Activated CD8-positive, alpha-beta T cell treated with anti-CD3 and anti-CD28 coated beads, Interleukin-2, amount 10 ng/mL, durations not matched to agents 7 days and 5 days (primary cell): ENCODE measurements at regions of chr22 and their contacts with region 1.

Region 1: GRCh38 chr22:40950962-40951794 is at the start of gene RBX1:
- DNase-seq: peak; percentile 99
- ATAC-seq: peak; percentile 84
- H3K4me3 Mint-ChIP-seq: peak within 1 kb of the TSS; percentile 100
- H3K27ac Mint-ChIP-seq: peak within 1 kb of the TSS; percentile 100
- H3K4me1 Mint-ChIP-seq: peaks cover 34% of the 10 kb centered on the region
- H3K27me3 Mint-ChIP-seq: no peaks in the 10 kb centered on the region
- total RNA-seq, gene RBX1: 84.0 to 87.9 TPM

Region 2: GRCh38 chr22:40965936-40966725 is 15.0 kb after region 1 on chr22:
- CTCF ChIA-PET with region 1: interaction called, 6 read pairs
- POLR2A ChIA-PET with region 1: interaction called, 17 read pairs
- DNase-seq: no peak
- ATAC-seq: no peak
- H3K4me3 Mint-ChIP-seq: no peak overlapping the region
- H3K27ac Mint-ChIP-seq: no peak overlapping the region
- H3K4me1 Mint-ChIP-seq: peaks cover 17% of the 10 kb centered on the region
- H3K27me3 Mint-ChIP-seq: no peaks in the 10 kb centered on the region

Region 3: DNA sequence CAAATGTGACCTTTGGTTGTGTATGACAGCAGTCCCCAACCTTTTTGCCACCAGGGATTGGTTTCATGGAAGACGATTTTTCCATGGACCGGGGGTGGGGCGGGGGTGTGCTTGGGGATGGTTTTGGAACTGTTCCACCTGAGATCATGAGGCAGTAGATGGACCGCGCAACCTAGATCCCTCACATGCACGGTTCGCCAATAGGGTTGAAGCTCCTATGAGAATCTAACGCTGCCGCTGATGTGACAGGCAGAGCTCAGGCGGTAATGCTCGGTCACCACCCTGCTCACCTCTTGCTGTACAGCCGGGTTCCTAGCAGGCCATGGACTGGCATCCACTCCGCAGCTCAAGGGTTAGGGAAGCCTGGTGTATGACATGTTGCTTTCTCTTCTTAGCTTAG is 21.9 kb after region 1 on chr22:
- CTCF ChIA-PET with region 1: no interaction called
- POLR2A ChIA-PET with region 1: interaction called, 17 read pairs
- DNase-seq: no peak
- ATAC-seq: no peak
- H3K4me3 Mint-ChIP-seq: no peak overlapping the region
- H3K27ac Mint-ChIP-seq: no peak overlapping the region
- H3K4me1 Mint-ChIP-seq: peaks cover 3% of the 10 kb centered on the region
- H3K27me3 Mint-ChIP-seq: no peaks in the 10 kb centered on the region

Region 4: GRCh38 chr22:41022470-41023298 is 71.5 kb after region 1 on chr22:
- CTCF ChIA-PET with region 1: interaction called, 5 read pairs
- POLR2A ChIA-PET with region 1: interaction called, 42 read pairs
- DNase-seq: peak; percentile 83
- ATAC-seq: peak; percentile 75
- H3K4me3 Mint-ChIP-seq: peak overlapping the region; percentile 71
- H3K27ac Mint-ChIP-seq: peak overlapping the region; percentile 86
- H3K4me1 Mint-ChIP-seq: peaks cover 19% of the 10 kb centered on the region
- H3K27me3 Mint-ChIP-seq: peaks cover 16% of the 10 kb centered on the region

Region 5: GRCh38 chr22:41091132-41092022 is 140.2 kb after region 1 on chr22:
- CTCF ChIA-PET with region 1: interaction called, 4 read pairs
- POLR2A ChIA-PET with region 1: interaction called, 107 read pairs
- DNase-seq: peak; percentile 99
- ATAC-seq: peak; percentile 87
- H3K4me3 Mint-ChIP-seq: peak overlapping the region; percentile 97
- H3K27ac Mint-ChIP-seq: peak overlapping the region; percentile 100
- H3K4me1 Mint-ChIP-seq: peaks cover 23% of the 10 kb centered on the region
- H3K27me3 Mint-ChIP-seq: no peaks in the 10 kb centered on the region

Region 6: DNA sequence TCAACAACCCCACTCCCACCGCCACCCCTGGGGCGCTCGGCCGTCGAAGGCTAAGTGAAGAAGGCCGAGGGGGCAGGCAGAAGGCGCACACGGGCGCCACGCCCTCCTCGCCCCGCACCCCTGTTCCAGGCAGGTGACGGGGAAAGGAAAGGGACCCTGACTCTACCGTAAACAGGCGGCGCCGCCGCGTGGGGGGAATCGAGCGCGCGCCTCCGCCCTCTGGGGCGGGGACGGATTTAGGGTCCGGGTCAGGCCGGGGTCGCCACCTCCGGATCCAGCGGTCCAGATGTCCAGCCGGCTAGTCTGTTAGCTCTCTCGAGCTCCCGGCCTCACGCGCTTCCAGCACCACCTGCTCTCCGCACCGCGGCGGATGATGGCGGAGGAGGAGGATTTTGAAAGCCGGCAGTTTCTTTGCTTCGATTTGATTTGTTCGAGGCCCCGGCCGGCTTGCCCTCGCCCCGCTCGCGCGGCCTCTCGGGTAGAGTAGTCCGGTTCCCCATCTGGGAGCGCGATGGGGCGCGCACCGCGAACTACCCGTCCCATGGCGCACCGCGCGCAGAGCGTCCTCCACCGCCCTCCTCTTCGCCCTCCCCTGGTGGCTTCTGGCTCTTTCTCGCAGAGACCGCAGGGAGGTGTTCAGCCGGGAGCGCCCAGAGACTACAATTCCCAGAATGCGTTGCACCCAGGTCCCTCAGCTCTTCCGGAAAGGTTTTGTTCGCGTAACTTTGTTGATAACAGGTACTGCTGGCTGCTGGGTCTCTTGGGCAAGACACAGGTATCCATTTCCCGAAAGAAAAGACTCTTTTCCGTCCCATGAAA is 334.9 kb after region 1 on chr22 and contains the start of gene RANGAP1:
- CTCF ChIA-PET with region 1: no interaction called
- POLR2A ChIA-PET with region 1: interaction called, 18 read pairs
- DNase-seq: peak; percentile 99
- ATAC-seq: peak; percentile 98
- H3K4me3 Mint-ChIP-seq: peak within 1 kb of the TSS; percentile 97
- H3K27ac Mint-ChIP-seq: peak within 1 kb of the TSS; percentile 98
- H3K4me1 Mint-ChIP-seq: peaks cover 42% of the 10 kb centered on the region
- H3K27me3 Mint-ChIP-seq: no peaks in the 10 kb centered on the region
- total RNA-seq, gene RANGAP1: 123 to 125 TPM